ENCODE measurements at regions of chr5 and their contacts with region 1.

Region 1: GRCh38 chr5:54217826-54218503 is 92.4 kb downstream of the ARL15 start:
- DNase-seq: peak; percentile 63 to 72
- H3K4me3 ChIP-seq: no peak overlapping the region
- H3K4me1 ChIP-seq: peaks cover under 1% of the 10 kb centered on the region; the same call in 1 of the 2 replicates
- H3K27me3 ChIP-seq: no peaks in the 10 kb centered on the region

Region 2: DNA sequence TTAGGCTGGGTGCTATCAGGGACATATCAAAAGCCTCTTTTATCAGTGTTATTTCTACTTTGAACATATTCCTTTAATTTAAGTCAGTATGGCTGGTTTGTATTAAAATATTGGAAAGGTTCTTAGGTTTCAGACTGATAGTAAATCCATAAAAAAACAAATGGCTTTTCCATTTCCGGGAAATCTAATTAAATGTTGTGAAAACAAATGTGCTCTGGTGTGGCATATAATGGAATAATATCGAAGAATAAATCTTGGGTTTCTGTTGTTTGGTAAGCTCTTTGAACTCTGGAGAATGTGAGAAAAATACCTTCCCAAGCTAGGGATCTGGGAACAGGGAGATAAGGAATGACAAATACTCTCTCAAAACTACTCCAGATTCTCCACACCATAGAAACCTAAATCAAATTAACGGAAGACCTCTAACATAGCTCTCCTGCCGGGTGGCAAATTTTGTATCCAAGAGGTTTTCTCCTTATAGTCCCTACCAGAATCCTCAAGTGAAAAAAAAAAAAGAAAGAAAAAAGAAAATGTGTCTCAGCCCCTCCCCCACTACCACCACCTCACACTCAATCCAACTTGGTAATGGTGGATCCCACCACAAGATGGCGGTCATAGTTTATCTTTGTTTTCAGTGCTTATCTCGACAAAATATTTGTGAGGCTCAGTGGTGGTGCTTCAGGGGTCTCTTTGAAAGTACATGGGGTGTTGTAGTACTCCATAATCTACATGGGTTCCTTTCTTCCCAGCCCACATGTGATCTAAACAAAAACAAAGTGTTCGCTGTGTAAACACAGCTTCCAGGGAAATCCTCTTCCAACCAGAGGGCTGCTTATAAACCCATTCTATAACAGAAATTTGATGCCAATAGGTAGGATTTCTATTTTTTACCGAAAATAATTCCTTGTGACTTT is 792.1 kb before region 1 on chr5:
- in situ Hi-C with region 1: loop called (anchors 25 kb)
- DNase-seq: peak; percentile 44 to 68
- H3K4me3 ChIP-seq: no peak overlapping the region
- H3K4me1 ChIP-seq: peaks cover 8% of the 10 kb centered on the region
- H3K27me3 ChIP-seq: no peaks in the 10 kb centered on the region

Measured in HAP-1 (cell line).